Mammary epithelial cell (primary cell): ENCODE measurements at regions of chr12 and their contacts with region 1.

Region 1: DNA sequence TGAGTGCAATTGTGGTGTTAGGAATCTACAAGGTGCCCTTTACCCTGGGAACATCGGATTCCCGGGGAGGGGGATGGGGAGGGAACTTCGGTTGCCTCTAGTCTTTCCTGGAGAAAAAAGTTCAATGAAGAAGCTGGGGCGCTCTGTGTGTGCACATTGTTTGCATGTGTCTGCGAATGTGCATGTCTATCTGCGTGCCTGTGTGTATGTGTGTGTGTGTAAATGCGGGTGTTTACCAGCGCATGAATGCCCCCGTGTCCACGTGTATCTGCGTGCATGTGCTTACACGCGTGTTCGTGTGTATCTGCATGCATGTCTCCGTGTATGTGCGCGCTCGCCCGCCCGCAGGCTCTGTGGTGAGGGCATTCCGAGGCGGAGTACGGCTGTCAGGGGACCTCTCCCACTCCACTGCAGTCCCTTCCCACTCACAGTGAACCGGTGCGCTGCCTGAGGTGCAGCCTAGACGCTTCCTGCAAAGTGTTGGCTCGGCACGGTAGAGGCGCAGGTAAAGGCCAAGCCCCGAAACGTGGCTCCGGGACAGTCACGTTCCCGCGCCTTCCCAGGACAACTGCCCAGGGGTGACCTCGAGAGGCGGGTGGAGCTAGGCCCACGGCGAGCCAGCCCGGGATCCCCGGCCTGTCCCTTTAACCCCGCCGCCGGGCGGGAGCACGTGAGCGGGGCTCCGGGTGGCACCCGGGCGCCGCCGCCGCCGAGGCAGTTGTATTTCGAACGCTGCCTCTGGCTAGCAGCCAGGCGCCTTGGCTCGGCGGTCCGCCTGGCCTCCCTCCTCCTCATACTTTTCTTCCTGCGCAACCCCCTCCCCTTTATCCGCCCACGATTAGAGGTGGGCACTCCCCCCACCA is 539 bp upstream of the HMGA2 start:
- DNase-seq: peak; percentile 81
- H3K4me3 ChIP-seq: peak overlapping the region; percentile 70 to 85 (median 80)
- H3K27ac ChIP-seq: peak overlapping the region; percentile 97
- H3K4me1 ChIP-seq: peaks cover 32% of the 10 kb centered on the region
- H3K27me3 ChIP-seq: no peaks in the 10 kb centered on the region
- CTCF ChIP-seq: no peak

Region 2: GRCh38 chr12:65287426-65287825 is 536.3 kb before region 1 on chr12:
- CTCF ChIA-PET with region 1: no interaction called
- dilution Hi-C with region 1: no loop called
- in situ Hi-C with region 1: no loop called
- intact Hi-C with region 1: no loop called
- DNase-seq: no peak
- H3K4me3 ChIP-seq: no peak overlapping the region
- H3K27ac ChIP-seq: no peak overlapping the region
- H3K4me1 ChIP-seq: no peaks in the 10 kb centered on the region
- H3K27me3 ChIP-seq: no peaks in the 10 kb centered on the region
- CTCF ChIP-seq: no peak

Region 3: DNA sequence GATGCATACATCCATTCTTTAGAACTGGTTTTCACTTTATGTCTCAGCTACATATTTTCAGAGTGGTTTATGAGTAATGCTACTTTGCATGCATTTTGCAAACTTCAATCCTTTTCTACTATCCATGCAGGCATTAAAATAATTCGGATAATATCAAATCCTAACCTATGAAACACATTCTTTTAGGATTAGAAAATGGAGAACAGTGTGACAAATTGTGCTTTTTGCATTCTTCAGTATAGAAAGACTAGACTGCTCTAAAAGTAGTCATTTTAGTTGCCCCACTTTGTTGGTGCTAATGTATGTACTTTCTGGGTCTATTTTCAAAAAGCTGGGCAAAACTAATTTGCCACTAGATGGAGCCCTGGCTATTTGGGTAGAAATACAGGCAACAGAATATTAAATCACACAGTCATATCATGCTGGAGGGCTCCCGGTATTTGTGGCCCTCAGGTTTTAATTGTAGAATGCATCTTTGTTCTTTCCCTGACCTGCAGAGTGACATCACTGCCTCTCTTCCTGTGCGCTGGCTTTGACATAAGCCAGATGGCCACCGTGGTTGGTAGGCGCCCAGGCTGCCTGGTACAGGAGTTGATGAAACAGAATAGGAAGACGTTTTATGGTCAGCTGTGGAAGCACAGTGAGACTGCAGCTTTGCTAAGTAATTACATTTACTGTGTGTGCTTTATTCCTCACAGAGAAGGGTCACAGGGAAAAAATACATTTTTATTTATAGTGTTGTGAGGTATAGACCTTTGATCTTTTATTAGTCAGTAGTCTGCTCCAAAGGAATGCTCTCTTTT is 517.2 kb before region 1 on chr12:
- CTCF ChIA-PET with region 1: no interaction called
- dilution Hi-C with region 1: no loop called
- in situ Hi-C with region 1: no loop called
- intact Hi-C with region 1: loop called (anchors 2 kb)
- DNase-seq: peak; percentile 76
- H3K4me3 ChIP-seq: peak overlapping the region; percentile 20 to 33 (median 21)
- H3K27ac ChIP-seq: peak overlapping the region; percentile 90
- H3K4me1 ChIP-seq: peaks cover 29% of the 10 kb centered on the region
- H3K27me3 ChIP-seq: no peaks in the 10 kb centered on the region
- CTCF ChIP-seq: peak; percentile 83 to 84

Region 4: GRCh38 chr12:65556681-65557437 is 266.9 kb before region 1 on chr12:
- CTCF ChIA-PET with region 1: no interaction called
- dilution Hi-C with region 1: loop called (anchors 25 kb)
- in situ Hi-C with region 1: no loop called
- intact Hi-C with region 1: loop called (anchors 1 kb)
- DNase-seq: peak; percentile 94
- H3K4me3 ChIP-seq: no peak overlapping the region
- H3K27ac ChIP-seq: peak overlapping the region; percentile 77
- H3K4me1 ChIP-seq: peaks cover 26% of the 10 kb centered on the region
- H3K27me3 ChIP-seq: no peaks in the 10 kb centered on the region
- CTCF ChIP-seq: peak; percentile 94 to 98

Region 5: DNA sequence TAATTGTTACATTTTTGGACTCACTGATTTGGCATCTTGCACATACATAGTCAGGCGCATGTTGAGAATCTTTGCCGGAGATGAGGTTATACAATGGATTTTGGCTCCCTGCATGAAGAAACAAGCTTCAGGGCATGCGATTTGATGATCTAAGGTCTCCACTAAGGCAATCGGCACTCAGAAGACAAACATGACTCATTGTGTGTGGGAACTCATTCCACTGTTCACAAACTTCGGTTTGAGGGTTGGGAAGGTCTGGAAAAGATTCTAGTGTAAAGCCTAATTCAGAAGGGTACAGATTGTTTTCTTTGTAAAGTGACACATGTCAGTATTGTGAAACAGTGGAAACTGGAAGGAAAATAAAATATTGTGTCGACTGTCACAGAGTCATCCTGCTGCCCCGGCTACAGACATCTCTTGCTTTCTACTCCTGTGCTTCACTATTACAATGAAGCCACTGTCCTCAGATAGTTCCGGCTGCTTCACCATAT is 192.1 kb before region 1 on chr12:
- CTCF ChIA-PET with region 1: no interaction called
- dilution Hi-C with region 1: loop called (anchors 5 kb)
- in situ Hi-C with region 1: no loop called
- intact Hi-C with region 1: loop called (anchors 2 kb)
- DNase-seq: peak; percentile 100
- H3K4me3 ChIP-seq: no peak overlapping the region
- H3K27ac ChIP-seq: peak overlapping the region; percentile 100
- H3K4me1 ChIP-seq: peaks cover 54% of the 10 kb centered on the region
- H3K27me3 ChIP-seq: no peaks in the 10 kb centered on the region
- CTCF ChIP-seq: no peak

Region 6: GRCh38 chr12:65657635-65658034 is 166.1 kb before region 1 on chr12:
- CTCF ChIA-PET with region 1: no interaction called
- dilution Hi-C with region 1: no loop called
- in situ Hi-C with region 1: no loop called
- intact Hi-C with region 1: no loop called
- DNase-seq: no peak
- H3K4me3 ChIP-seq: no peak overlapping the region
- H3K27ac ChIP-seq: peak overlapping the region; percentile 97
- H3K4me1 ChIP-seq: peaks cover 31% of the 10 kb centered on the region
- H3K27me3 ChIP-seq: no peaks in the 10 kb centered on the region
- CTCF ChIP-seq: no peak

Region 7: GRCh38 chr12:65740873-65741600 is 82.7 kb before region 1 on chr12:
- CTCF ChIA-PET with region 1: interaction called, 4 read pairs
- dilution Hi-C with region 1: no loop called
- in situ Hi-C with region 1: no loop called
- intact Hi-C with region 1: loop called (anchors 1 kb)
- DNase-seq: peak; percentile 73
- H3K4me3 ChIP-seq: peak overlapping the region; percentile 54 to 90 (median 77)
- H3K27ac ChIP-seq: peak overlapping the region; percentile 49
- H3K4me1 ChIP-seq: peaks cover 14% of the 10 kb centered on the region
- H3K27me3 ChIP-seq: no peaks in the 10 kb centered on the region
- CTCF ChIP-seq: no peak

Region 8: DNA sequence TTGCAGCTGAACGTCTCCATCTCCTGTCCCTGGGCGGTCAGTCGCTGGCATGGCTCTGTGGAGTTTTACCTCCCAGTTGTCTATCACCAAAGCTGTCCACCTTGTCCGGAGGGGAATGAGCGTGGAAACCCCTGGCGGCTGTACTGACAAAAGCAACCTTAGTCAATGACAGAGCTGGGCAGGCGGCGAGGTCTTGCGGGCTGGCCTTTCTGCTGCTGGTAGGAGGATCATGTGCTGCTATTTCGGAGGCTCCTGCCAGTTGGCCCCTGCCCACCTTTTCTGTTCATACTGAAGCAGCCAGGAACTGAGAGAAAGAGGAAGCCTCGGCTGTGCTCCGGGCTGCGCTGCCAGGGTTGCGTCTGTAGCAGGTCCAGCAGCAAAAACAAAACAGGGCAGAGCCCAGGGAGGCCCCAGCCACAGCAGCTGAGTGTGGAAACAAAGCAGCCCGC is 58.2 kb after region 1 on chr12:
- CTCF ChIA-PET with region 1: no interaction called
- dilution Hi-C with region 1: no loop called
- in situ Hi-C with region 1: no loop called
- intact Hi-C with region 1: no loop called
- DNase-seq: no peak
- H3K4me3 ChIP-seq: no peak overlapping the region
- H3K27ac ChIP-seq: no peak overlapping the region
- H3K4me1 ChIP-seq: peaks cover 46% of the 10 kb centered on the region
- H3K27me3 ChIP-seq: no peaks in the 10 kb centered on the region
- CTCF ChIP-seq: peak in 1 of 2 donors; percentile 22

Region 9: DNA sequence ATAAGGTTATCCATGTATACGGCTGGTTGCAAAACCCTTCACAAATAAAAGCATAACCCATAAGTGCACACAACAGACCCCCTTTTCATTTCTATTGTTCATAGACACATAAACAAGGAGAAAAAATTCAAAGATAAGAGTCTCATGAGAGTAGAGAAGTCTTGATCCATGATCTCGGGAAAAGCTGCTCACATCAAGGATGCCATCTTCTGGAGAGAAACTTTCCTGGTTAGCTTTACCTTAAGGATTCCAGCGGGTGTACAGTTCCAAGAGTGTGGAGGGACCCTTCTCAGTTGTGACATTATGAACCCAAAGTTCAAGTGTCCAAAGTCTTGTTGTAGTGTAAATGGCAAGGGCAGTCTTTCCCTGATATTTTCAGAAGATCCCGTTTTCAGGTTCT is 162.3 kb after region 1 on chr12:
- CTCF ChIA-PET with region 1: no interaction called
- dilution Hi-C with region 1: no loop called
- in situ Hi-C with region 1: no loop called
- intact Hi-C with region 1: loop called (anchors 10 kb)
- DNase-seq: no peak
- H3K4me3 ChIP-seq: no peak overlapping the region
- H3K27ac ChIP-seq: no peak overlapping the region
- H3K4me1 ChIP-seq: no peaks in the 10 kb centered on the region
- H3K27me3 ChIP-seq: no peaks in the 10 kb centered on the region
- CTCF ChIP-seq: no peak

Region 10: DNA sequence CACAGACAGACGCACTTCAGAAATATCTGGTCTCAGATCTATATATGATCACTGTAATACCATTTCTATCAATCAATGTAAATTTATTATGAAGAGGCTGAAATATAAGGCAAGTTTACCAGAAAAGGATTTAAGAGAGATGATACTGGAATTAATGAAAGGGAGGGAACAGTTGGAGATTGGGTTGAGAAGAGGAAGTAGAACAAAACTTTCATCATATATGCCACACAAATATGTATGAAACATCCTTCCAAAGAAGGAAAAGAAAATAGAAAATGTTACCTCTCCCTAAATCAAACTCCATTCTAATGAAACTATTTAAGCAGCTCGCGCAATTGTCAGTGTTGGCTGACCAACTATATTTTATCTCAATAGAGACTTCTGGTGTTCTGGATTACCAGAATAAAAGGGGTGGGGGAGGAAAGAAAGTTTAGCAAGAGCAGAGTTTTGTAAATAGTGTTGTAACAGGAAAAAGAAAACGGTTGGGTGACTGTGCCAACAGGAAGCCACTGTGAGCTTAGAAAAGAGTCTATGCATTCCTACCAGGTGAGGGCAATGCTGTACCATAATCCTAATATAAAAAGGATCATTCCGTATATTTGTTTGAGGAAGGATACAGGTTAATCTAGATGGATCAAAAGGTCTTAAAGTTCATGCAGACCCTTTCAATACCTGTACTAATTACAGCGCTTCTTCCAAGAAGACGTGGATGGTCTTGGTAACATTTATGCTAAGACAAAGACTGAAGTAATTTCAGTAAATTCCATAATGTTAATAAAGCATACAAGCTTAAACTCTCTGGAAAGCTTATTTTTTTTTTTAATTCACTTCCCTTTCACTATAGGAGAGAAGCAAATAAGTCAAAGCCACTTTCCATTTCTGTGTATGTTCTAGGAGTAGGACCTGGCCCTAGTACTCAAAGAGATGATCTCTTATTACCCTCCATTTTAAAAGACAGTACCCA is 321.3 kb after region 1 on chr12:
- CTCF ChIA-PET with region 1: interaction called, 14 read pairs
- dilution Hi-C with region 1: no loop called
- in situ Hi-C with region 1: no loop called
- intact Hi-C with region 1: no loop called
- DNase-seq: peak; percentile 55
- H3K4me3 ChIP-seq: no peak overlapping the region
- H3K27ac ChIP-seq: no peak overlapping the region
- H3K4me1 ChIP-seq: no peaks in the 10 kb centered on the region
- H3K27me3 ChIP-seq: no peaks in the 10 kb centered on the region
- CTCF ChIP-seq: peak; percentile 76

Region 11: GRCh38 chr12:66361703-66362102 is 538.0 kb after region 1 on chr12:
- CTCF ChIA-PET with region 1: no interaction called
- dilution Hi-C with region 1: no loop called
- in situ Hi-C with region 1: no loop called
- intact Hi-C with region 1: no loop called
- DNase-seq: peak; percentile 2
- H3K4me3 ChIP-seq: no peak overlapping the region
- H3K27ac ChIP-seq: no peak overlapping the region
- H3K4me1 ChIP-seq: no peaks in the 10 kb centered on the region
- H3K27me3 ChIP-seq: no peaks in the 10 kb centered on the region
- CTCF ChIP-seq: no peak